Posterior vena cava (tissue), 2 donors: ENCODE measurements at regions of chr14 and their contacts with region 1.

Region 1: DNA sequence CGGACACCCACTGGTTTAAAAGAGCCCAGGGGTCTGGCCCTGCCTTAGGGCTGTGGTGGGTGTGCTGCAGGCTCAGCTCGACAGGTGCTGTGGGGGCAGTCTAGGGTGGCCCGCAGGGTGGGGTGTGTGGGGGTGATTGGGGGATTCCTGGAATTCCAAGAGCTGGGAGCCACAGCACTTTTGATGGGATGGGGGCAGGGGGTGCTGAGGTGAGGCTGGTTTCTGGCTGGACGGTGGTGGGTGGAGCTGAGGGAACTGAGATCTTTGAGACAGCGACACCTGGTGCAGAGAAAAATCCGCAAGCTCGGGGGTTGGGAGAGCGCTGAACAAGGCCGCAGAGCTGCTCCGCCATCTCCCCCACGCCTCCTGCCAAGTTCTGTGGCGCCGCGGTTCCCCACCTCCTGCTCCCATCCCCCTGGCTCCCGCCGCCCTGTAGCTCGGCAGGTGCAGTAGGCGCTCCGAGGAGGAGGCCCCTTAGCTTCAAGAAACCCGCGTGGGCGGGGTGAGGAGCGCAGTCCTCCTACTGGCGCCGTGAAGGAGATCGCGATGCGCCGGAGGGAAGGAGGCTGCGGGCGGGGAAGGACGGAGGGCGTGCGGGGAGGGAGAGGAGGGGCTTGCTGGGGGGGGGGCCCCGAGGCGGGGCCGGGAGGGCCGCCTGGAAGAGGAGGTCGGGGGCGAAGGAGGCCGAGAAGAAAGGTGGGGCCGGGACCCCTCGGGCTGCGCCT is 1.3 kb upstream of the TEDC1 start:
- DNase-seq: peak; percentile 93

Region 2: DNA sequence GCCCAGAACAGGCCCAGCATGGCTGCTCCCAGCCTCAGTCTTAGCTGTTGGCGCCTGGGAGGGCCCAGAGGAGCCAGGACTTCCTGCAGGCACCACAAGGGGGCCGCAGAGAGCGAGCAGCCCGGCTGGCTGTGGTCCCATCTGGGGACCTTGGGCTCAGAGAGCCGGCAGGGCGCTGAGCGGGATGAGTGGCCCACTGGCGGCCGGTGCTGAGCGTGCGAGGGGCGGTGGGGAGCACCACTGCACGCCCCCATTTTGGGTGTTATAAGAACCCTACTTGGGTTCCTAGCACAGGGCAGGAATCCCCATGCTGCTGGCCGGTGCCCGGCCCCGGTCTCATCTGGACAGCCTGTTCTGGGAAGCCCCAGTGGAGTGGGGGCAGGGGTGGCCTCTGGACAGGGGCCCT is 41.0 kb before region 1 on chr14:
- intact Hi-C with region 1: loop called in 1 of 2 experiments (anchors 5 kb)
- DNase-seq: peak; percentile 93